ENCODE measurements at regions of chr3 and their contacts with region 1.

Region 1: GRCh38 chr3:10115326-10116137 is at the start of gene BRK1:
- DNase-seq: peak; percentile 99 to 100 (median 100)
- ATAC-seq: peak; percentile 95
- H3K4me3 ChIP-seq: peak within 1 kb of the TSS; percentile 67
- H3K27ac ChIP-seq: peak within 1 kb of the TSS; percentile 78
- H3K4me1 ChIP-seq: peaks cover 9 to 14% of the 10 kb centered on the region in 2 experiments; a peak in 3 of 5 replicates
- H3K27me3 ChIP-seq: no peaks in the 10 kb centered on the region
- CTCF ChIP-seq: no peak
- EP300 ChIP-seq: 0 out of 2 replicates have a peak, but pooled peaks have one; percentile 19
- POLR2A ChIP-seq: peak; percentile 99
- RAD21 ChIP-seq: 0 out of 4 replicates have a peak, but pooled peaks have one; percentile 10 to 12
- polyA plus RNA-seq, gene BRK1: 538 to 634 TPM

Region 2: DNA sequence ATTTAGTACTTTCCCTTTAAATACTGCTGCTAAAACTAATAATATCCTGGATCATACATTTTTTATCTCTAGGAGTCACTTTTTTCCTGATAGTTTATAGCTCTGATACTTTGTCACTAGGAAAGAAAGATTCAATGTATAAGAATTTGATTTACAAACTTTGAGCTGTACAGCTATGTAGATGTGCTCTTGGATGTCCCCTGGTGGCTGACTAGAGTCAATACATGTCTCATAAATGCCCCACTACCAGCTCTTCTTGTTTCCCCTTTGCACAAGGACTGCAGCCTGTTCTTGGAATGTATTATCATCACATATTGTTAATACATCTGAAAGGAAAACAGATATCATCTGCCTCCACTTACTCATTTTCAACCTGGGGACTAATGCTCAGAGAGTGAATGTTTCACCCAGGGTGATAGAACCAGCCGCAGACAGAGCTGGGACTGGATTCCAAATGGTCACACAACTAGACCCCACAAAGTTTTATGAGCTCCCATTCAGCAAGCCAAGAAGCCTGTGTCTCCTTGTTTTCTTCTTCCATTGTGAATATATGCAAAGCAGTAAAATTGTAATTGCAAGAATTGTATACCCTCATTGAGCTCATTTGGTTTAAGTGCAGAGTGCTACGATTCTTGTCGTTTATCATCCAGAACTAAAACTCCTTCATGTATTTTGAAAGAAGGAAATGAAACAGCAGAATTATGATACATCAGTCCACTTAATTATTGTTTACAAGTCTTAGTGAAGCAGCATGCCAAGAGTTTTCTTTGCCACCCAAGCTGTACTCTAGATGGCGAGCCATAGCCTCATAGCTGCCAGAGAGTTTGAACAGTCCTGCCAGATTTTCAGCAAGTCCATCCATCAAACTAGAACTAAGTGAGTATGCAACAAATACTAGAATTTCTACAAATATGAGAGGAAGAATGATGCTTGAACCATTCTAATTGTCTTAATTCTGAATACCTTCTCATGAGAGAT is 1875.5 kb before region 1 on chr3:
- CTCF ChIA-PET with region 1: no interaction called
- POLR2A ChIA-PET with region 1: no interaction called
- in situ Hi-C with region 1: no loop called
- intact Hi-C with region 1: no loop called
- DNase-seq: peak; percentile 44 to 56 (median 54)
- ATAC-seq: peak; percentile 74; the same call in 2 of the 3 replicates
- H3K4me3 ChIP-seq: no peak overlapping the region
- H3K27ac ChIP-seq: no peak overlapping the region
- H3K4me1 ChIP-seq: no peaks in the 10 kb centered on the region
- H3K27me3 ChIP-seq: no peaks in the 10 kb centered on the region
- CTCF ChIP-seq: peak; percentile 41 to 73 (median 68); a peak in 5 of 6 replicates
- EP300 ChIP-seq: no peak
- POLR2A ChIP-seq: no peak
- RAD21 ChIP-seq: peak; percentile 62 to 76

Region 3: GRCh38 chr3:10047876-10048275 is 67.7 kb before region 1 on chr3:
- CTCF ChIA-PET with region 1: no interaction called
- POLR2A ChIA-PET with region 1: no interaction called
- in situ Hi-C with region 1: no loop called
- intact Hi-C with region 1: no loop called
- DNase-seq: no peak
- ATAC-seq: no peak
- H3K4me3 ChIP-seq: no peak overlapping the region
- H3K27ac ChIP-seq: no peak overlapping the region
- H3K4me1 ChIP-seq: no peaks in the 10 kb centered on the region
- H3K27me3 ChIP-seq: no peaks in the 10 kb centered on the region
- CTCF ChIP-seq: no peak
- EP300 ChIP-seq: no peak
- POLR2A ChIP-seq: no peak
- RAD21 ChIP-seq: no peak

Region 4: DNA sequence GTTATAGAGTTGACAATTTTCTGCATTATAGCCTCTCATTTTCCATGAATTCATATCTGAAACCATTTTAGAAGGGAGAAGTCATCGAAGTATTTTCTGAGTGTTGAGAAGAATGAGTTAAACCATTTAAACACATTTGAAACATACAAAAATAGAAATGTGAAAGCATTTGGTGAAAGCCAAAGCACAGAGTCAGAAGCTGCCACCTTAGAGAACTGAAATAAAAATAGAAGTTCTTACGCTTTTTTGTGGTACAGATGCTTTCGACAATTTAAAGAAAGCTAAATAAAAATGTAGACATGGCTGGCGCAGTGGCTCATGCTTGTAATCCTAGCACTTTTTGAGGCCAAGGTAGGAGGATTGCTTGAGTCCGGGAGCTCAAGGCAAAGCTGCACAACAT is 16.5 kb before region 1 on chr3:
- CTCF ChIA-PET with region 1: no interaction called
- POLR2A ChIA-PET with region 1: interaction called, 10 read pairs
- in situ Hi-C with region 1: no loop called
- intact Hi-C with region 1: no loop called
- DNase-seq: no peak
- ATAC-seq: no peak
- H3K4me3 ChIP-seq: no peak overlapping the region
- H3K27ac ChIP-seq: no peak overlapping the region
- H3K4me1 ChIP-seq: no peaks in the 10 kb centered on the region
- H3K27me3 ChIP-seq: no peaks in the 10 kb centered on the region
- CTCF ChIP-seq: no peak
- EP300 ChIP-seq: no peak
- POLR2A ChIP-seq: no peak
- RAD21 ChIP-seq: no peak

Region 5: GRCh38 chr3:10268930-10269329 is 153.4 kb after region 1 on chr3:
- CTCF ChIA-PET with region 1: no interaction called
- POLR2A ChIA-PET with region 1: no interaction called
- in situ Hi-C with region 1: no loop called
- intact Hi-C with region 1: no loop called
- DNase-seq: no peak
- ATAC-seq: no peak
- H3K4me3 ChIP-seq: no peak overlapping the region
- H3K27ac ChIP-seq: no peak overlapping the region
- H3K4me1 ChIP-seq: peaks cover 2 to 16% of the 10 kb centered on the region in 2 experiments; a peak in 3 of 5 replicates
- H3K27me3 ChIP-seq: no peaks in the 10 kb centered on the region
- CTCF ChIP-seq: no peak
- EP300 ChIP-seq: no peak
- POLR2A ChIP-seq: no peak
- RAD21 ChIP-seq: no peak

Measured in K562 (cell line).